Activated B cell treated with CpG ODN at 0.5 μM for 24 hours (primary cell): ENCODE measurements at regions of chr18 and their contacts with region 1.

Region 1: DNA sequence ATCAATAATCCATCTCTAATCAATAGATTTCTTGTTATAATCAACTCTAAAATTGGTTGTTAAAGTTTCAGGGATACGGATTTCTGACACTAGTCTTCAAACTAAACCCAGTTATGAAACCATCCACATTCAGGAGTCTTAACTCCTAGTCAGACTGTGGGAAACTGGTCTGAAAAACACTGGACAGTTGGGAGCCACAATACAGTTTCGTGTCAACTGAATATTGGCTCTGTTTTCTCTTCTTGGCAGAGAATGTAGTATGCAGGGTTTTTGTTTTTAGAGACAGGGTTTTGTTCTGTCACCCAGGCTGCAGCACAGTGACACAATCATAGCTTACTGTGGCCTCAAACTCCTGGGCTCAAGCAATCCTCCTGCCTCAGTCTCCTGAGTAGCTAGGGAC is 123.1 kb downstream of the RTTN start:
- DNase-seq: no peak
- ATAC-seq: no peak
- H3K4me3 Mint-ChIP-seq: no peak overlapping the region
- H3K27ac Mint-ChIP-seq: no peak overlapping the region
- H3K4me1 Mint-ChIP-seq: no peaks in the 10 kb centered on the region
- H3K27me3 Mint-ChIP-seq: no peaks in the 10 kb centered on the region
- CTCF ChIP-seq: no peak

Region 2: DNA sequence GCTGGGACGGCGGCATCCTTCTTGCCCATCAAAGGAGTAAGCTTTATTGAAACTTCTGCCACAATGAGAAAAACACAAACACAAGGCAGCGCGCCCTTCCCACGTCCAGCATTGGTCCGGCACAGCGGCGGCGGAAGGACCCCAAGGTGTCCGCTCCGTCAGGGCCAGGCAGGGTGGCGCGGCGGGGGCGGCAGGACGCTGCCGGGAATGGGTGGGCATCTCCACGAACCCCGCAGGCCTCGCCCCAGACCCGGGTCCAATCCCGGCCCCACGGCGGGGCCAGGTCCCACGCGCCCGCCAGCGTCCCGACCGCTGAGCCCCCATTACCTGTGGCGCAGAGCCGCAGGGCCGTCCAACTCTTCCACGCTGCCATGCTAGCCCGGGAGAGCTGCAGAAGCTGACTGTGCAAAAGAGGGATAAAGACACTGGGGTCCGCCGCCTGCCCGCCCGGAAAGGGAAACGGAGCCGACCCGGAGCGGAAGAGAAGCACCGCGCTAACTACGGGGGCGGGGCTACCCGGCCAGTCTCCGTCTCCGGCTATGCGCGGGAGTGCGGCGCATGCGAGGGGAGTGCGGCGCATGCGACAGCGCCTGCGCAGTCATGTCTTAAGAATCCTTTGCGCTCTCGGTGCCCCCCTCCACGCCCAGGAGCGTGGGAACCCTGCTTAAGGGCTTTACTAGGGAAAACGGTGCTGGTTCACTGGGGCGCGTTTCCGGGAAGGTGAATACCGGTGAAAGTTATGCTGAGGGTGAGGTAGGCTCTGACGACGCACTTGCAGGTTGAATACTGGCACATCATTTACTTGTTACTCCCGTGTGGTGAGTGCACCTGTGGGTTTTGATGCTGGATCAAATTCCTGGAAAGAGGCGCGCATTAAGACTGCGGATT is 1367.6 kb before region 1 on chr18 and contains the start of gene TMX3:
- CTCF ChIA-PET with region 1: no interaction called
- POLR2A ChIA-PET with region 1: no interaction called
- intact Hi-C with region 1: loop called (anchors 10 kb)
- DNase-seq: peak; percentile 88
- ATAC-seq: peak; percentile 99
- H3K4me3 Mint-ChIP-seq: peak within 1 kb of the TSS; percentile 95
- H3K27ac Mint-ChIP-seq: peak within 1 kb of the TSS; percentile 82
- H3K4me1 Mint-ChIP-seq: peaks cover 35% of the 10 kb centered on the region
- H3K27me3 Mint-ChIP-seq: no peaks in the 10 kb centered on the region
- CTCF ChIP-seq: no peak
- total RNA-seq, gene TMX3: 47.0 and 59.9 TPM in 2 replicates

Region 3: DNA sequence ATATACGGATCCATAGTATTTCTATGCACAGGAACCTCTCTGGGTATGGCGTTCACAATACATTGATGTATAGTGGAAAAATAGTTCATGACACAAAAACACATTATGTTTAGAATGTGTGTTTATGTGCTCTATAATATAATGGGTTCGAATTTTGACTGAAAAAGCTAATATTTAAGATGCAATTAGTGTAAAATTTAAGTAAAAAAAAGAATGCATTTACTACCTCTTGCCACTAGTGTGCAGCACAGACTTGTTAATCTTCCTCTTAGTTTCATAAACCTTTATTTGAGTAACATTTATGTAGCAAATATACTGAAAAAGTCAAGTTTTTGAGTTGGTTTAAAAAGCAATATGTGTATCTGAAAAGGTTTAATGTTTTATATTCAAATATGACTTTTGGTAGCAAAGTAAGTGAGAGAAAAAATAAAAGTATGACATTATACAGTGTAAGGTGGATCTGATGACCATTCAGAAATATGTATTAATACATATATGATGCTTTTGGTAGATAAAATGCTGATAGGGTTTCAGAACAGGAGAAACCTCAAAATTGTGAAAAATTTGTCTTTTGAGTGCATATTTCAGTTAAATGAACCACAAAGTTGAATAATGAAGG is 1235.1 kb before region 1 on chr18:
- CTCF ChIA-PET with region 1: interaction called, 7 read pairs
- POLR2A ChIA-PET with region 1: no interaction called
- intact Hi-C with region 1: loop called (anchors 1 kb)
- DNase-seq: no peak
- ATAC-seq: no peak
- H3K4me3 Mint-ChIP-seq: no peak overlapping the region
- H3K27ac Mint-ChIP-seq: no peak overlapping the region
- H3K4me1 Mint-ChIP-seq: no peaks in the 10 kb centered on the region
- H3K27me3 Mint-ChIP-seq: no peaks in the 10 kb centered on the region
- CTCF ChIP-seq: no peak

Region 4: DNA sequence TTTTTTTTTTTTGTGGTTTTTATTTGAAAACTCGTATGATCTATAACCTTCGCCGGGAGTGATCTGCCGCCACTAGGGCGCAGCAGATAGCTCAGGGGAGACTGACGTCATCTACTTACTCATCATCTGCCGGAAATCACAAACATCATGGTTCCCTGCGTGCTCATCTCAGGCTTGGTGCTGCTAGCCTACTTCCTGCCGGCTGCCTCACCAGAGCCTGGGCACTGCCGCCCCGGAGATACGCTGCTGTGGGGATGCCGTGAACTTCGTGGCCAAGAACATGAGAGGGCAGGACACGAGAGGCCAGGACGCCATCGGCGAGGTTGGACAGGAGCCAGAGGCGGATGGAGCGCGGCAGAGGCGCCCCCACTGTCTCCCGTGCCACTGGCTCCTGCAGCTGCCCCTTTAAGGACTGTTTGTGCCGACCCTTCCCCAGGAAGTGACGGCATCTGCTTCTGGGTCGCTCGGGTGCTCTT is 612.9 kb before region 1 on chr18:
- CTCF ChIA-PET with region 1: no interaction called
- POLR2A ChIA-PET with region 1: no interaction called
- intact Hi-C with region 1: loop called (anchors 1 kb)
- DNase-seq: no peak
- ATAC-seq: no peak
- H3K4me3 Mint-ChIP-seq: no peak overlapping the region
- H3K27ac Mint-ChIP-seq: no peak overlapping the region
- H3K4me1 Mint-ChIP-seq: no peaks in the 10 kb centered on the region
- H3K27me3 Mint-ChIP-seq: no peaks in the 10 kb centered on the region
- CTCF ChIP-seq: no peak

Region 5: DNA sequence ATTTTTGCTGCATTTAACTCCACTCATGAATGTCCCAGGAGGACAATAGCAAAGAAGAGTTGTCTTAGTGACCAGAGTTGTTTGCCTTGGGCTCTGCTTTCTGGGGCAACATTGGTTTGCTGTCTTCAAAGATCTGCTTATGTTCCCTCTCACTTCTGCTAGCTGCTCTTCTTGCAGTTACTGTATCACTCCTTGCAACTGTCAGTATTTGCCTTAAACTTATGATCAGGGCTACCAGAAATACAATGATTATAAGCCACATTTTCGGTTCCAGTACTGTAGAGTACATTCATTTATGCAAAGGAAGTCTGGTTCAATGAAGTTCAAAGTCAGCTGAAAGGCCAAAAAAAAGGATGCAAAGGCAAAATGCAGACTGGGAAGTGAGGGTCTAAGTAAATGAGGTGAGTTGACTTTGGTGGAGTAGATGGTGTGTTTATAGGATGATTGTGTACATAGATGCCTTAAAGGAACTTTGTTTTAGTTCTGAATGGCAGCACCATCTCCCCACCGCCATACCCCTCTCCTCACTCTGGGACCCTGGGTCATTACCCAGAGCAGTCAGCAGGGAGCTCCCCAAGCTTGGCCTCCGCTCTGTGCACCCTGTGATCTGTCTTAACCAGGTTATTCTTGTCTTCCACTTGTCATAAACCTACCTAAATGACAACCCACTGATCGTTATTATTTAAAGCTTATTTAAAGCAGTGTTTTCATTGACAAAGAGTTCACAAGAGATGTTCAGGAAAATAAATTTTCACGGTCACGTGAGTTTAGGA is 445.7 kb before region 1 on chr18:
- CTCF ChIA-PET with region 1: no interaction called
- POLR2A ChIA-PET with region 1: no interaction called
- intact Hi-C with region 1: loop called (anchors 5 kb)
- DNase-seq: no peak
- ATAC-seq: peak; percentile 34
- H3K4me3 Mint-ChIP-seq: no peak overlapping the region
- H3K27ac Mint-ChIP-seq: no peak overlapping the region
- H3K4me1 Mint-ChIP-seq: no peaks in the 10 kb centered on the region
- H3K27me3 Mint-ChIP-seq: no peaks in the 10 kb centered on the region
- CTCF ChIP-seq: no peak

Region 6: DNA sequence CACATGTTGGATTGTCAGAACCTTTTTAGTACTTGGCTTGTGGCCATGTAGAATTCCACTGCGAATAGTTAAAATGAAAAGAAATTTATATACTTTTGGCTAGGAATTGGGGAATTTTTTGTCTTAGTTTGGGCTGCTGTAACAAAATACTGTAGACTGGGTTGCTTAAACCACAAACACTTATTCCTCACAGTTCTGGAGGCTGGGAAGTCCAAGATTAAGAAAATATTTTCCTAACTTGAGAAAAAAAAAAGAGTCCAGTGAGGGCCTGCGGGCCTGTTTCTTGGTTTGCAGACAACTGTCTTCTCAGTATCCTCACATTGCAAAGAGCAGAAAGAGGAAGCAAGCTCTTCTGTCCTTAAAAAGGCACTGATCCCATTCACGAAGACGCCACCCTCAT is 216.7 kb before region 1 on chr18:
- CTCF ChIA-PET with region 1: no interaction called
- POLR2A ChIA-PET with region 1: no interaction called
- intact Hi-C with region 1: no loop called
- DNase-seq: no peak
- ATAC-seq: no peak
- H3K4me3 Mint-ChIP-seq: no peak overlapping the region
- H3K27ac Mint-ChIP-seq: no peak overlapping the region
- H3K4me1 Mint-ChIP-seq: no peaks in the 10 kb centered on the region
- H3K27me3 Mint-ChIP-seq: no peaks in the 10 kb centered on the region
- CTCF ChIP-seq: no peak